CD8-positive, alpha-beta memory T cell (primary cell): ENCODE measurements at regions of chr19 and their contacts with region 1.

Region 1: GRCh38 chr19:46766569-46767317 is 20.5 kb upstream of the STRN4 start:
- DNase-seq: peak; percentile 41 to 75 (median 44)
- H3K4me3 ChIP-seq: no peak overlapping the region
- H3K4me3 Mint-ChIP-seq: no peak overlapping the region
- H3K27ac ChIP-seq: no peak overlapping the region
- H3K27ac Mint-ChIP-seq: peak overlapping the region in 2 of 8 donors; percentile 53 to 77
- H3K4me1 ChIP-seq: no peaks in the 10 kb centered on the region
- H3K4me1 Mint-ChIP-seq: peaks cover 4 to 6% (median 4%) of the 10 kb centered on the region in 3 donors
- H3K27me3 ChIP-seq: no peaks in the 10 kb centered on the region
- H3K27me3 Mint-ChIP-seq: peaks cover 0 to 1% of the 10 kb centered on the region in 2 donors

Region 2: DNA sequence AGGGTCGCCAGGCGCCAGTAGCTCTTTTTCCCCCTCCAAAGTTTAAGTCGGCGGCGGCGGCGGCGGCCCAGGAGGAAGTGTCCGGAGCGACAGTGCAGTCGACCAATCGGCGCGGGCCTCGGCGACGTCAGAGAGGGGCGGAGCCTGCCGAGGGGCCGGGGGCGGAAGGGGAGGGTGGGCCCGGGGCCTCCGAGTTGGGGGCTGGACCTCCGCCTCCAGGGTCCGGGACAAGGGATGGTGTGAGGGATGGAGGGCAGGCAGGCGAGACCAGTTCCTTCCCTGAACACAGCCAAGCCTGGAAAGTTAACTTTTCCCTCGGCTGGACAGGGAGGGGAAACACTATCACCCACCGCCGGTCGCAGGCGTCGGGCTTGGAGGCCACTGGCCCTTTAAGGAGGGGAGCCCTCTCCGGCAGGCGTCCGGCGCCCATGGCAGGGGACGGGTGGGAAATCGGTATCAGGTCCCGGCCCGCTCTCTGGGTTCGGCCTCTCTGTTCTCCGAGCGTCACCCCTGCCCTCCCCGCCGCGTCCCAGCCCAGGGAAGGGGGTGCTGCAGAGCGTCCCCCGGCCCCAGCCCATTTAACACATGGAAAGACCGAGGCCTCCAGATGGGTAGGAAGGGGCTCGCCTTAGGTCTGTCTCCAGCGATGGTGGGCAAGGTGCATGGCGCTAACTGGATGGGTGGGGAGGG is 49.6 kb before region 1 on chr19 and contains the start of gene PRKD2:
- CTCF ChIA-PET with region 1: no interaction called
- POLR2A ChIA-PET with region 1: no interaction called
- DNase-seq: peak; percentile 71 to 89 (median 83)
- H3K4me3 ChIP-seq: peak within 1 kb of the TSS; percentile 90
- H3K4me3 Mint-ChIP-seq: peak within 1 kb of the TSS; percentile 94 to 98 (median 95)
- H3K27ac ChIP-seq: peak within 1 kb of the TSS; percentile 92
- H3K27ac Mint-ChIP-seq: peak within 1 kb of the TSS; percentile 94 to 99 (median 98)
- H3K4me1 ChIP-seq: peaks cover 37% of the 10 kb centered on the region
- H3K4me1 Mint-ChIP-seq: peaks cover 42 to 77% (median 49%) of the 10 kb centered on the region in 3 donors
- H3K27me3 ChIP-seq: no peaks in the 10 kb centered on the region
- H3K27me3 Mint-ChIP-seq: no peaks in the 10 kb centered on the region
- total RNA-seq, gene PRKD2: 61.6 to 63.8 TPM

Region 3: GRCh38 chr19:46748325-46749109 is 18.2 kb before region 1 on chr19:
- CTCF ChIA-PET with region 1: interaction called, 3 read pairs
- POLR2A ChIA-PET with region 1: interaction called, 10 read pairs
- DNase-seq: peak; percentile 56 to 83 (median 64)
- H3K4me3 ChIP-seq: no peak overlapping the region
- H3K4me3 Mint-ChIP-seq: peak overlapping the region; percentile 29 to 94 (median 59)
- H3K27ac ChIP-seq: no peak overlapping the region
- H3K27ac Mint-ChIP-seq: peak overlapping the region in 5 of 8 donors; percentile 42 to 95 (median 71)
- H3K4me1 ChIP-seq: peaks cover 25% of the 10 kb centered on the region
- H3K4me1 Mint-ChIP-seq: peaks cover 33 to 42% (median 41%) of the 10 kb centered on the region in 3 donors
- H3K27me3 ChIP-seq: no peaks in the 10 kb centered on the region
- H3K27me3 Mint-ChIP-seq: peaks cover 0 to 2% of the 10 kb centered on the region in 2 donors

Region 4: GRCh38 chr19:46753420-46754155 is 13.2 kb before region 1 on chr19:
- CTCF ChIA-PET with region 1: interaction called, 23 read pairs
- POLR2A ChIA-PET with region 1: interaction called, 10 read pairs
- DNase-seq: peak; percentile 45 to 76 (median 54)
- H3K4me3 ChIP-seq: no peak overlapping the region
- H3K4me3 Mint-ChIP-seq: peak overlapping the region in 1 of 7 donors; percentile 9
- H3K27ac ChIP-seq: no peak overlapping the region
- H3K27ac Mint-ChIP-seq: peak overlapping the region in 2 of 8 donors; percentile 72 to 89
- H3K4me1 ChIP-seq: no peaks in the 10 kb centered on the region
- H3K4me1 Mint-ChIP-seq: peaks cover 9 to 18% (median 13%) of the 10 kb centered on the region in 3 donors
- H3K27me3 ChIP-seq: no peaks in the 10 kb centered on the region
- H3K27me3 Mint-ChIP-seq: no peaks in the 10 kb centered on the region